Activated CD4-positive, alpha-beta T cell treated with anti-CD3 and anti-CD28 coated beads for 36 hours (primary cell): ENCODE measurements at regions of chr19 and their contacts with region 1.

Region 1: GRCh38 chr19:572140-572742 is at the start of gene BSG:
- DNase-seq: peak; percentile 99
- ATAC-seq: peak; percentile 87
- H3K4me3 Mint-ChIP-seq: peak within 1 kb of the TSS; percentile 90
- H3K27ac Mint-ChIP-seq: peak within 1 kb of the TSS; percentile 95
- H3K4me1 Mint-ChIP-seq: peaks cover 36% of the 10 kb centered on the region
- H3K27me3 Mint-ChIP-seq: no peaks in the 10 kb centered on the region
- total RNA-seq, gene BSG: 165 to 175 TPM

Region 2: GRCh38 chr19:383922-384798 is 188.1 kb before region 1 on chr19:
- CTCF ChIA-PET with region 1: no interaction called
- POLR2A ChIA-PET with region 1: no interaction called
- intact Hi-C with region 1: loop called in 1 of 2 experiments (anchors 1 kb)
- DNase-seq: no peak
- ATAC-seq: no peak
- H3K4me3 Mint-ChIP-seq: no peak overlapping the region
- H3K27ac Mint-ChIP-seq: peak overlapping the region; percentile 77
- H3K4me1 Mint-ChIP-seq: peaks cover 25% of the 10 kb centered on the region
- H3K27me3 Mint-ChIP-seq: peaks cover 33% of the 10 kb centered on the region

Region 3: GRCh38 chr19:459724-460511 is 112.3 kb before region 1 on chr19:
- CTCF ChIA-PET with region 1: no interaction called
- POLR2A ChIA-PET with region 1: no interaction called
- intact Hi-C with region 1: no loop called
- DNase-seq: peak; percentile 41
- ATAC-seq: peak; percentile 63
- H3K4me3 Mint-ChIP-seq: peak overlapping the region; percentile 45
- H3K27ac Mint-ChIP-seq: no peak overlapping the region
- H3K4me1 Mint-ChIP-seq: peaks cover 8% of the 10 kb centered on the region
- H3K27me3 Mint-ChIP-seq: peaks cover 14% of the 10 kb centered on the region

Region 4: GRCh38 chr19:531009-531752 is 41.1 kb before region 1 on chr19:
- CTCF ChIA-PET with region 1: interaction called, 7 read pairs
- POLR2A ChIA-PET with region 1: interaction called, 3 read pairs
- intact Hi-C with region 1: loop called (anchors 1 to 2 kb)
- DNase-seq: peak; percentile 93
- ATAC-seq: peak; percentile 78
- H3K4me3 Mint-ChIP-seq: peak overlapping the region; percentile 77
- H3K27ac Mint-ChIP-seq: peak overlapping the region; percentile 84
- H3K4me1 Mint-ChIP-seq: peaks cover 24% of the 10 kb centered on the region
- H3K27me3 Mint-ChIP-seq: peaks cover 1% of the 10 kb centered on the region

Region 5: GRCh38 chr19:543910-544608 is 28.2 kb before region 1 on chr19 and contains the start of gene GZMM:
- CTCF ChIA-PET with region 1: no interaction called
- POLR2A ChIA-PET with region 1: interaction called, 3 read pairs
- intact Hi-C with region 1: loop called in 1 of 2 experiments (anchors 1 kb)
- DNase-seq: peak; percentile 84
- ATAC-seq: peak; percentile 96
- H3K4me3 Mint-ChIP-seq: peak within 1 kb of the TSS; percentile 73
- H3K27ac Mint-ChIP-seq: peak within 1 kb of the TSS; percentile 86
- H3K4me1 Mint-ChIP-seq: peaks cover 20% of the 10 kb centered on the region
- H3K27me3 Mint-ChIP-seq: no peaks in the 10 kb centered on the region
- total RNA-seq, gene GZMM: 22.5 to 25.3 TPM

Region 6: DNA sequence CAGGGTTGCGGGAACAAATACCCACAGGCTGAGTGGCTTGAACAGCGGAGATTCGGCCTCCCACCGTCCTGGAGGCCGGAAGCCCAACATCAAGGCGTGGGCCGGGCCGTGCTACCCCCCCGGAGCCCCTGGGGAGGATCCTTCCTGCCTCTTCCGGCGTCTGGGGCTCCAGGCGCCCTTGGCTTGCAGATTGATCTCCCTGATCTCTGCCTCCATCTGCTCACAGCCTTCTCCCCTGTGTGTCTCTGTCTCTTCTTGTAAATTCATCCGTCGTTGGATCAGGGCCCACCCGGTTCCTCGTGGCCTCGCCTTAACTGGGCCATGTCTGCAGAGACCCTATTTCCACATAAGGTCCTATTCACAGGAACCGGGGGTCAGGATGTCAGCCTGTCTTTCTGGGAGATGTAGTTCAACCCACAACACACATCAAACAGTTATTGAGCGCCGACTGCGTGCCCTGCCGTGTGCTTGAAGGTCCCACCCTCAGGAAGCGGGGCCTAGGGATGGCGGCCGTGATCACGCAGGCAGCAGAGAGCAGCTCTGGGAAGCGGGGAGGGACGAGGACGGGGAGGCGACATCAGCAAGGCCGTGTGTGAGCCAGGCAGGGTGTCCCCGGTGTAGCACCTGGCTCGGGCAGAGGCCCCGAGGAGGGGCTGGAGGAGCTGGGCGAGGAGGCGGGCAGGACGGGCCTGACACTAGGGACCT is 38.7 kb after region 1 on chr19:
- CTCF ChIA-PET with region 1: no interaction called
- POLR2A ChIA-PET with region 1: interaction called, 4 read pairs
- intact Hi-C with region 1: loop called in 1 of 2 experiments (anchors 1 kb)
- DNase-seq: peak; percentile 75
- ATAC-seq: peak; percentile 45
- H3K4me3 Mint-ChIP-seq: peak overlapping the region; percentile 72
- H3K27ac Mint-ChIP-seq: peak overlapping the region; percentile 97
- H3K4me1 Mint-ChIP-seq: peaks cover 25% of the 10 kb centered on the region
- H3K27me3 Mint-ChIP-seq: peaks cover 2% of the 10 kb centered on the region

Region 7: DNA sequence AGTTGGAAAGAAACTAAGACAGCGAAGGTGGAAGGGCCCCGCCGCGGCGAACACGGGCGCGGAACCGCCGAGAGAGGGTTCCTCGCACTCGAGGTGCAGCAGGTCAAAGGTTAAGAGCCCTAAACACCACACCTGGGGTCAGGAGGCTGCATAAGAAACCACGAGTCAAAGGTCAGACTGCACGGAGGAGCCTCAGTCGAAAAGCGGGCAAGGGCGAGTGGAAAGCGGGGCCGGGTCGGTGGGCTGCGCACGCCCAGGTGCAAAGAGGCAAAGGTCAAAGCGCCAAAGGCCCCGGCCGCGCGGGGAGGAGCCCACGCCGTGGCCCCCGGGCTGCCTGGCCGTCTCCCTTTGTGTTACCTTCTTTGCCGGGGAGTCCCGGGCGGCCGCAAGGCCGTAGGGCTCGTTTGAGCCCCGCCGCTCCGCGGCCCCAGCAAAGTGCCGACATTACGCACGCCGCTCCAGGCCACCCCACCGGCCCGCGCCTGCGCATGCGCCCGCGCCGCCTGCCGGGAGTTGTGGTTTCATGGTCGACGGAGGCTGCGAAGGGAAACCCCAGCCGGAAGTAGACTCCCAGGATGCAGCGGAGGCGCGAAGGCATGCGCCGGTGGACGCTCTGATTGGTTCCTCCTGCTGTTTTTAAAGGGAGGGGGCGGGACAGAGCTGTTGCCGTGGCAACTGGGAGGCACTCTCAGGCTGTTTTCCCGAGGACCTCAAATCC is 61.0 kb after region 1 on chr19 and contains the start of gene POLRMT:
- CTCF ChIA-PET with region 1: no interaction called
- POLR2A ChIA-PET with region 1: no interaction called
- intact Hi-C with region 1: loop called (anchors 1 kb)
- DNase-seq: peak; percentile 98
- ATAC-seq: peak; percentile 98
- H3K4me3 Mint-ChIP-seq: peak within 1 kb of the TSS; percentile 97
- H3K27ac Mint-ChIP-seq: peak within 1 kb of the TSS; percentile 91
- H3K4me1 Mint-ChIP-seq: peaks cover 29% of the 10 kb centered on the region
- H3K27me3 Mint-ChIP-seq: no peaks in the 10 kb centered on the region
- total RNA-seq, gene POLRMT: 69.0 to 77.4 TPM

Region 8: GRCh38 chr19:926589-927350 is 354.5 kb after region 1 on chr19:
- CTCF ChIA-PET with region 1: no interaction called
- POLR2A ChIA-PET with region 1: no interaction called
- intact Hi-C with region 1: no loop called
- DNase-seq: peak; percentile 85
- ATAC-seq: peak; percentile 34
- H3K4me3 Mint-ChIP-seq: peak overlapping the region; percentile 70
- H3K27ac Mint-ChIP-seq: peak overlapping the region; percentile 25
- H3K4me1 Mint-ChIP-seq: peaks cover 8% of the 10 kb centered on the region
- H3K27me3 Mint-ChIP-seq: no peaks in the 10 kb centered on the region